Breast epithelium (tissue), 4 donors: ENCODE measurements at regions of chr10 and their contacts with region 1.

Region 1: DNA sequence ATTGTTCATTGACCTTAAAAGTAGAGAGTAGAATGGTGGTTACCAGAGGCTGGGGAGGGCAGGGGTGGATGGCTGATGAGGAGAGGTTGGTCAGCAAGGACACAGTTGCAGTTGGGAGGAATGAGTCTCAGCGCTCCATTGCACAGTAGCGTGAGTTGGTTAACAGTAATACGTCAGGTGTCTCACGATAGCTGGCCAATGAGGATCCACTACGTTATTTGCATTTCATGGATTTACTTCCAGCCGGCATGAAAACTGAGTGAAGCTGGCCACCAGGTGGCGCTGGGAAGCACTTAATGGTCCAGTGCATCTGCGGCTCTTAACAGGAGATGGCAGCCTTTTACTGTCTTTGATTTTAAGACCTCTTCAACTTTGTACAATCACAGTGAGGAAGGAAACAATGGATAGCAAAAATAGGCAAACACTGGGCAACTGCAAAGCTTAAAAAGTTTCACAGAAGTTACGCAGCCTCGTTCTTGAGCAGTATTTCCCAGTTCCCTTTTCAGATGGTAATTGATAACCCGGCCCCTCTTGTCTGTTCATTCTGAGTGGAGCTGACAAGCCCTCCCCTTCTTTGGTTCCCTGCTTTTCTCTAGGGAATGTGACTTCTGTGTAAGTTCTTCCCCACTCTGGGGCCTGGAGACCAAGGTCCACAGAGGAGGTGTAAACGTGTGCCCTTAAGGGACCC is 23.7 kb downstream of the AKR1E2 start:
- DNase-seq: peak; percentile 86 to 91
- H3K4me3 ChIP-seq: no peak overlapping the region
- H3K27ac ChIP-seq: peak overlapping the region; percentile 3 to 60
- H3K4me1 ChIP-seq: peaks cover 0 to 10% of the 10 kb centered on the region in 2 donors
- H3K27me3 ChIP-seq: no peaks in the 10 kb centered on the region
- CTCF ChIP-seq: peak; percentile 98 to 100 (median 99)
- POLR2A ChIP-seq: no peak

Region 2: DNA sequence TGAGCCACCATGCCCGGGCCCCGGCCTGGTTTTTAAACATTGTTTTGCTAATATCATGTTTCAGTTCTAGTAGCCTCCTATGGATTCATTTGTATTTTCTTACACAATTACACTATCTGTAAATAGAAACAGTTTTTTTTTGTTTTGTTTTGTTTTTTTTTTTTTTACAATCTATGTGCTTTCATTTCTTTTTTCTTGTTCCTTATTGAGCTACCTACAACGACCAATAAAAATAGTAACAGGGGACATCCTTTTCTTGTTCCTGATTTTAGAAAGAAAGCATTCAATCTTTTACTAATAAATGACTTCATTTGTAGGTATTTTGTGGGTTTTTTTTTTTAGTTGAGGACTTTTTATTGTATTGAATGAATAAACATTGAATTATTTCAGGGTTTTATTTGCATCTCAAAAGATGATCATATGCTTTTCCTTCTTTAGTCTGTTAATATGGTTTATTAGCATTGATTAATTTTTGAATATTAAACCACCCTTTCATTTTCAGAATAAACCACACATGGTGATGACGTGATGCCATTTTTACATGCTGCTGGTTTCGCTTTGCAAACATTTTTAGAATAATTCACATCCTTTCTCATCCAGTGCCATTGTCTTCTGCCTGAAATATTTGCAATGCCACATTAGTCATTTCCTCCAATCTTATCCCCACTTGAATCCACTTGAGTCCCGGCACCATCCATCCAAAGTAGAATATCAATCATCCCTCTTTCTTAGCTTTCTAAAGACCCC is 41.8 kb before region 1 on chr10:
- intact Hi-C with region 1: no loop called
- DNase-seq: no peak
- H3K4me3 ChIP-seq: no peak overlapping the region
- H3K27ac ChIP-seq: no peak overlapping the region
- H3K4me1 ChIP-seq: no peaks in the 10 kb centered on the region
- H3K27me3 ChIP-seq: no peaks in the 10 kb centered on the region
- CTCF ChIP-seq: no peak
- POLR2A ChIP-seq: no peak

Region 3: DNA sequence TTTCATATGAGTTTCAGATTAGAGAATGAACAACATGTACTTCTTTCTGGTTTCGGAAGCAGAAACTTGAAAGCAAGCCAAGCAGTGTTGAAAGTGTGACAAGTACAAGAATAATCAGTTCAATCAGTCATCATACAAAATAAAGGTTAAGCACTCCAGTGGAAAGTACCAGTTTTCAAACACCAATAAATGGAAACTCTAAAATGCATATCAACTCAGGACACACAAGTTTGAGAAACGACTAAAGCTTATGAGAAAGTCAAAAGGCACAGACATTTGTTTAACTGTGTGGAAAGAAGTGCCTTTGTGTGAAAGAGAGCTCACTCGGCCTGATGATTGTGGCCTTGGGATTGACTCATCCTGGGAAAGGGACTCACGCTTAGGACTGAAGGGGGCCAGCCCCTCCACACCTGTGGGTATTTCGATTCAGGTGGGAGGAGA is 52.9 kb after region 1 on chr10:
- intact Hi-C with region 1: no loop called
- DNase-seq: no peak
- H3K4me3 ChIP-seq: no peak overlapping the region
- H3K27ac ChIP-seq: peak overlapping the region; percentile 33 to 62
- H3K4me1 ChIP-seq: no peaks in the 10 kb centered on the region
- H3K27me3 ChIP-seq: no peaks in the 10 kb centered on the region
- CTCF ChIP-seq: no peak
- POLR2A ChIP-seq: no peak

Region 4: GRCh38 chr10:5385224-5385623 is 535.5 kb after region 1 on chr10:
- intact Hi-C with region 1: loop called (anchors 10 kb)
- DNase-seq: no peak
- H3K4me3 ChIP-seq: no peak overlapping the region
- H3K27ac ChIP-seq: no peak overlapping the region
- H3K4me1 ChIP-seq: no peaks in the 10 kb centered on the region
- H3K27me3 ChIP-seq: no peaks in the 10 kb centered on the region
- CTCF ChIP-seq: no peak
- POLR2A ChIP-seq: no peak